H1 (cell line): ENCODE measurements at regions of chr4 and their contacts with region 1.

Region 1: GRCh38 chr4:24980064-24980690 is 50.6 kb downstream of the LGI2 start:
- DNase-seq: peak; percentile 41 to 67
- H3K4me3 ChIP-seq: no peak overlapping the region; a peak in 1 of 8 replicates
- H3K27ac ChIP-seq: no peak overlapping the region
- H3K4me1 ChIP-seq: peaks cover 0 to 5% (median 0%) of the 10 kb centered on the region in 4 experiments; a peak in 3 of 7 replicates
- H3K27me3 ChIP-seq: no peaks in the 10 kb centered on the region; a peak in 1 of 7 replicates
- CTCF ChIP-seq: peak; percentile 61 to 92 (median 77)
- EP300 ChIP-seq: no peak
- POLR2A ChIP-seq: no peak
- RAD21 ChIP-seq: peak; percentile 71 to 78

Region 2: DNA sequence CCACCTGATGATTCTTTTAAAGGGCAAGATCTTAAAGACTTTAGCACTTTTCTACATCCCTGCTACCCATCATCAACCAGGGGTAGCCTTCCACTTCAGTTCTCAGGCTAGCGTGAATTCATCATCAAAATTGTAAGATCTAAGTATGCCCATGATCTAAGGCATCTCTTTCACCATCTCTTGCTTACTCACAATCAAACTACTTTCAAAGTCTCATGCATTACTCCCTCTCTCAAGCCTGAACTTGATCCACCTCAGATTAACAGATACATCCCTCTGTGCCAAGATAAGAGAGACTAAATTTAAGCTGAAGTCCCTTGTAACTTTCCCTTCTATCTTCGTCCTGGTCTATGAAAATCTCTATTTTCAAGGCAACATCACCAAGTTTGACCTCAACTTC is 458.6 kb before region 1 on chr4:
- CTCF ChIA-PET with region 1: no interaction called
- POLR2A ChIA-PET with region 1: no interaction called
- DNase-seq: no peak
- H3K4me3 ChIP-seq: no peak overlapping the region
- H3K27ac ChIP-seq: no peak overlapping the region
- H3K4me1 ChIP-seq: peaks cover 0 to 4% (median 1%) of the 10 kb centered on the region in 4 experiments; a peak in 2 of 7 replicates
- H3K27me3 ChIP-seq: no peaks in the 10 kb centered on the region
- CTCF ChIP-seq: no peak
- EP300 ChIP-seq: no peak
- POLR2A ChIP-seq: no peak
- RAD21 ChIP-seq: no peak

Region 3: DNA sequence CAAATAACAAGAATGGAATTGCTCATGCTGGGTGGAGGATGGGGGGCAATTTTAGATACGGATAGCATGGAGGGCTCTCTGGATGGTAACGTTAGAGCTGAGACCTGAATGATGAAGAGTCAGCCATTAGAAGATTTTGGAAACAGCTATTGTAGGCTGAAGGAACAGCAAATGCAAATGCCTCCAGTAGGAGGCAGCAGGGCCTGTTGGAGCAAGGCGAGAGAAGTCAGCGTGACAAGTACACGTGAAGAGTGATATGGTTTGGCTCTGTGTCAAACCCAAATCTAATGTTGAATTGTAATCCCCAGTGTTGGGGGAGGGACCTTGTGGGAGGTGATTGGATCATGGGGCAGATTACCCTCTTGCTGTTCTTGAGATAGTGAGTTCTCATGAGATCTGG is 244.1 kb before region 1 on chr4:
- CTCF ChIA-PET with region 1: interaction called, 16 read pairs
- POLR2A ChIA-PET with region 1: no interaction called
- DNase-seq: peak in 1 of 2 experiments; percentile 54
- H3K4me3 ChIP-seq: no peak overlapping the region
- H3K27ac ChIP-seq: no peak overlapping the region
- H3K4me1 ChIP-seq: no peaks in the 10 kb centered on the region
- H3K27me3 ChIP-seq: no peaks in the 10 kb centered on the region
- CTCF ChIP-seq: peak; percentile 65 to 81 (median 66)
- EP300 ChIP-seq: no peak
- POLR2A ChIP-seq: no peak
- RAD21 ChIP-seq: peak; percentile 72 to 83

Region 4: GRCh38 chr4:24965627-24966026 is 14.6 kb before region 1 on chr4:
- CTCF ChIA-PET with region 1: interaction called, 14 read pairs
- POLR2A ChIA-PET with region 1: no interaction called
- DNase-seq: peak in 1 of 2 experiments; percentile 57
- H3K4me3 ChIP-seq: no peak overlapping the region
- H3K27ac ChIP-seq: no peak overlapping the region
- H3K4me1 ChIP-seq: peaks cover 0 to 2% (median 0%) of the 10 kb centered on the region in 4 experiments; a peak in 1 of 7 replicates
- H3K27me3 ChIP-seq: no peaks in the 10 kb centered on the region
- CTCF ChIP-seq: no peak
- EP300 ChIP-seq: no peak
- POLR2A ChIP-seq: no peak
- RAD21 ChIP-seq: no peak

Region 5: GRCh38 chr4:24999392-25000089 is 19.4 kb after region 1 on chr4:
- CTCF ChIA-PET with region 1: interaction called, 20 read pairs
- POLR2A ChIA-PET with region 1: no interaction called
- DNase-seq: no peak
- H3K4me3 ChIP-seq: no peak overlapping the region
- H3K27ac ChIP-seq: no peak overlapping the region
- H3K4me1 ChIP-seq: peaks cover 0 to 9% (median 0%) of the 10 kb centered on the region in 4 experiments; a peak in 1 of 7 replicates
- H3K27me3 ChIP-seq: no peaks in the 10 kb centered on the region
- CTCF ChIP-seq: no peak
- EP300 ChIP-seq: no peak
- POLR2A ChIP-seq: no peak
- RAD21 ChIP-seq: no peak

Region 6: GRCh38 chr4:25043548-25043947 is 63.4 kb after region 1 on chr4:
- CTCF ChIA-PET with region 1: interaction called, 18 read pairs
- POLR2A ChIA-PET with region 1: no interaction called
- DNase-seq: no peak
- H3K4me3 ChIP-seq: no peak overlapping the region
- H3K27ac ChIP-seq: no peak overlapping the region
- H3K4me1 ChIP-seq: no peaks in the 10 kb centered on the region
- H3K27me3 ChIP-seq: no peaks in the 10 kb centered on the region; a peak in 1 of 7 replicates
- CTCF ChIP-seq: no peak
- EP300 ChIP-seq: no peak
- POLR2A ChIP-seq: no peak
- RAD21 ChIP-seq: no peak

Region 7: DNA sequence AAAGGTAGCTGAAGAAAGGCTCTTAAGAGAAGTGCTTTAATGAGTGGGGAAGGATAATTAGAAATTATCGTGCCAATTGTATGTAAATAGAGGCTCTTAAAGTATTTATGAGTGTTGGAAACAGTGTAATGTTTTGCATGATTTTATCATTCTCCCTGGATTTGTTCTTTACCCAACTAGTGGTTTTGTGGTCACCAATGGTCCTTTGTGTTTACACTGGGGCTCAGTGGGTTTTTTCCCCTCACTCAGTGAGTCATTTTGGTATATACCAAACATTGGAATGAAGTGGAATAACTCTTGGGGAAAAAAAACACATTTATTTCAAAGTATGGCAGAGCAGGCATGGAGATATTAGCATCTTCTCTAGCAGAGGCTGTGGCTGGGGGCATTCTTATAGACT is 71.4 kb after region 1 on chr4:
- CTCF ChIA-PET with region 1: interaction called, 18 read pairs
- POLR2A ChIA-PET with region 1: no interaction called
- DNase-seq: no peak
- H3K4me3 ChIP-seq: no peak overlapping the region
- H3K27ac ChIP-seq: no peak overlapping the region
- H3K4me1 ChIP-seq: no peaks in the 10 kb centered on the region
- H3K27me3 ChIP-seq: no peaks in the 10 kb centered on the region
- CTCF ChIP-seq: no peak
- EP300 ChIP-seq: no peak
- POLR2A ChIP-seq: no peak
- RAD21 ChIP-seq: no peak